ENCODE measurements at regions of chr12 and their contacts with region 1.

Region 1: DNA sequence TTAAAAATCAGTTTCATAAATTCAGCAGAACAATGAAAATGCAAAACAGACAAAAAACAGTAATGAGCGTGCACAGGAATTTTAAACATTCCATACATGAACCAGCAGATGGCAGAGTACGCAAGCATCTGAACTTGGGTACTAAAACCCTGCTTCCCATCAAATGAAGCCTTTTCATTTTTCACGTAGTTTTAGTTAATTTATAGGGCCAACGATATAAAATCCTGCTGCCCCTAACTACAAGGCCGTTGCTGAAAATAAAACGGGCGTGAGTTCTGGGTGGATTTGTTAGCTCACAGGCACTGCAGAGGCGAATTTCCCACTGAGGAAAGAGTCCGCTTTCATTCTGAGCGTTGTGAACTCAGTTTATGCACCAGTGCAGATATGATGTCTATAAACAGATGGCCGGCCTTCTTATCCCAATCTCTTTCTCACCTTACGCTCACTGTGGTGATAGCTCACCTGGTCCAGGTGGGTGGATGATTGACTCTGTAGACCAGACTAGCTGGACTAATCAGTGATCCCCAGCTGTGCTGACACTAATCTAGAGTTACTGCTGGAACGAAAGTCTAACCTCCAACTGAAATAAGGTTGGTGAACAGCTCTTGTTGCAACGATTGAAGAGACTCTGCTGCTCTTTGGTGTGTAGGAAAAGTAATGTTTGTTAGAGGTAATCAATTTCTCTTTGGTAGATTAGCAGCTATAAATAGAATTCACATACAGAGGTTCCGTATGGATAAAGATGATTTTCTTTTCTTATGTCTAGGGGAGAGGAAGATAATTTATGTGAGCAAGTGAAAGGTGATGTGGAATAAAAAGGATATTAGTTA is 89.2 kb downstream of the PDZRN4 start:
- DNase-seq: peak; percentile 13 to 29 (median 22)
- ATAC-seq: no peak
- H3K4me3 ChIP-seq: no peak overlapping the region
- H3K27ac ChIP-seq: no peak overlapping the region
- H3K4me1 ChIP-seq: no peaks in the 10 kb centered on the region
- H3K27me3 ChIP-seq: no peaks in the 10 kb centered on the region
- CTCF ChIP-seq: peak in 2 of 3 experiments; percentile 43 to 57; a peak in 3 of 6 replicates
- EP300 ChIP-seq: no peak
- POLR2A ChIP-seq: no peak
- RAD21 ChIP-seq: peak; percentile 60 to 75

Region 2: GRCh38 chr12:42023733-42024494 is 746.6 kb after region 1 on chr12:
- CTCF ChIA-PET with region 1: interaction called, 7 read pairs
- POLR2A ChIA-PET with region 1: no interaction called
- in situ Hi-C with region 1: loop called (anchors 25 kb)
- intact Hi-C with region 1: loop called (anchors 1 kb)
- DNase-seq: peak; percentile 63 to 77 (median 66)
- ATAC-seq: peak; percentile 97
- H3K4me3 ChIP-seq: no peak overlapping the region
- H3K27ac ChIP-seq: no peak overlapping the region
- H3K4me1 ChIP-seq: no peaks in the 10 kb centered on the region
- H3K27me3 ChIP-seq: peaks cover 0 to 7% of the 10 kb centered on the region in 2 experiments; a peak in 1 of 5 replicates
- CTCF ChIP-seq: peak; percentile 83 to 96 (median 87)
- EP300 ChIP-seq: no peak
- POLR2A ChIP-seq: no peak
- RAD21 ChIP-seq: peak; percentile 77 to 87

Region 3: DNA sequence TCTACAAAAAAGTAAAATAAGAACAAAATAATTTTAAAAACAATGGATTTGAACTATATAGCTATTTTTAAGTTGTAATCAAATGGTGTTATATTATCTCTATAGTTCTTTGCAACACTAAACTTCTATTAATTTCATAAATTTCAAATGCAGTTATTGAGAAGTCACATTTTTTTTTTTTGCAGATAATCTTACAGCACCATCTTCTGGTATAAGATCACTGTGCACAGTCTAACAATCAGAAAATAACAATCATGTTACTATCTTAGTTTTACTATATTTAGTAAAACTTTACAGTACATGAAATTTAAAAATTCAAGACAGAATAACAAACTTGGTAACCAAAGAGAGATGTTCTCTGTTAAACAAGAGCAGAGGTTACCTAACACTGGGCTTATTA is 826.8 kb after region 1 on chr12:
- CTCF ChIA-PET with region 1: interaction called, 3 read pairs
- POLR2A ChIA-PET with region 1: no interaction called
- in situ Hi-C with region 1: no loop called
- intact Hi-C with region 1: loop called (anchors 10 kb)
- DNase-seq: no peak
- ATAC-seq: 0 out of 3 replicates have a peak, but pooled peaks have one; percentile 31
- H3K4me3 ChIP-seq: no peak overlapping the region
- H3K27ac ChIP-seq: no peak overlapping the region
- H3K4me1 ChIP-seq: no peaks in the 10 kb centered on the region
- H3K27me3 ChIP-seq: no peaks in the 10 kb centered on the region
- CTCF ChIP-seq: peak in 1 of 3 experiments; percentile 47; a peak in 1 of 6 replicates
- EP300 ChIP-seq: no peak
- POLR2A ChIP-seq: no peak
- RAD21 ChIP-seq: peak in 1 of 2 experiments; percentile 43; a peak in 2 of 4 replicates